Psoas muscle (tissue), 8 donors: ENCODE measurements at regions of chr11 and their contacts with region 1.

Region 1: GRCh38 chr11:13343931-13344717 is 66.5 kb downstream of the BMAL1 start:
- DNase-seq: peak; percentile 45 to 70
- ATAC-seq: peak; percentile 57 to 83 (median 72)
- H3K4me3 ChIP-seq: no peak overlapping the region
- H3K27ac ChIP-seq: no peak overlapping the region
- H3K4me1 ChIP-seq: peaks cover 7% of the 10 kb centered on the region
- H3K27me3 ChIP-seq: no peaks in the 10 kb centered on the region
- CTCF ChIP-seq: peak; percentile 80

Region 2: GRCh38 chr11:13210424-13210823 is 133.7 kb before region 1 on chr11:
- intact Hi-C with region 1: loop called (anchors 1 to 2 kb)
- DNase-seq: peak; percentile 34 to 52
- ATAC-seq: peak; percentile 59 to 91 (median 80)
- H3K4me3 ChIP-seq: no peak overlapping the region
- H3K27ac ChIP-seq: no peak overlapping the region
- H3K4me1 ChIP-seq: no peaks in the 10 kb centered on the region
- H3K27me3 ChIP-seq: peaks cover 0 to 2% (median 0%) of the 10 kb centered on the region in 3 donors
- CTCF ChIP-seq: peak; percentile 63

Region 3: GRCh38 chr11:13772223-13773046 is 428.3 kb after region 1 on chr11:
- intact Hi-C with region 1: no loop called
- DNase-seq: no peak
- ATAC-seq: no peak
- H3K4me3 ChIP-seq: no peak overlapping the region
- H3K27ac ChIP-seq: no peak overlapping the region
- H3K4me1 ChIP-seq: no peaks in the 10 kb centered on the region
- H3K27me3 ChIP-seq: no peaks in the 10 kb centered on the region
- CTCF ChIP-seq: peak; percentile 19